Lower leg skin (tissue), 4 donors: ENCODE measurements at regions of chr1 and their contacts with region 1.

Region 1: DNA sequence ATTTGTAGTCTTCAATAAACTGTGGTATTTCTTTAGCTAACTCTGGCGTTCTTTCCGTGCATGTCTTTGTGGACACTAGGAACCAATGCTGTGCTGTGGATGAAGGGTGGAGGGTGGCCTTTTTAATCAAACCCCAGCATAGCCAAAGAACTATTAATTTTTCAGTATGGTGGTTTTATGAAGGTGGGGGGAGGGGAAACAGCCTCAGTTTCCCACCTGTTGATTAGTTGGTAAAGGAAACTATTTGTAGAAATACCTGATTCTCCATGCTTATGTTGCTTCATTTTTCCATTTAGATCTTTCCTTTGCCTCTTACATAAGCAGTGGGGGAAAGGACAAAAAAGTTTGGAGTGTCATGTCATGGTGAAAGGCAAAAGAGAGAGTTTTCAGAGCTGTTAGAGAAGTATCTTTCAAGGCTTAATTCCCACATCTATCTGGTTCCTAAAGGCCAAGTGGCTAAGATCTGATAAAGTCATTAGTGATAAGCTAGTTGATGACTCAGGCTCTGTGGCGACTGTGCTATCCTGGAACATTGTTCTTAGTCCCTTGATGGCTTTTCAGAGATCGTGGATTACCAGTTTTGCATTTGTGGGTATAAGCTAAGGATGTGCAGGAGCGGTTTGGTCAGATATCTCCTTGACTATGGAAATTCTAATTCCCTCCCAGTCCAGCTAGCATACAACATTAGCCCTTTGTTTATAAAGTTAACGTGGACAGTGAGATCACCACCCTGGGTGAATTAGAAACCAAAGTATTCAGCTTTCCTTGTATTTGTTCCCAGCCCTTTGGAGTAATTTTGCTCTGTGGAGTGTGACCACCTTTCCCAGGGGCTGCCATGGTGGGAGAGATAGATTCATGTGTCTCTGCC is 8.7 kb upstream of the HAX1 start:
- DNase-seq: no peak
- H3K4me3 ChIP-seq: no peak overlapping the region
- CTCF ChIP-seq: no peak
- POLR2A ChIP-seq: no peak

Region 2: GRCh38 chr1:154183045-154183915 is 80.4 kb before region 1 on chr1:
- intact Hi-C with region 1: loop called (anchors 10 kb)
- DNase-seq: peak; percentile 94 to 99
- H3K4me3 ChIP-seq: peak overlapping the region; percentile 94
- CTCF ChIP-seq: no peak
- POLR2A ChIP-seq: peak in 1 of 2 donors; percentile 93

Region 3: DNA sequence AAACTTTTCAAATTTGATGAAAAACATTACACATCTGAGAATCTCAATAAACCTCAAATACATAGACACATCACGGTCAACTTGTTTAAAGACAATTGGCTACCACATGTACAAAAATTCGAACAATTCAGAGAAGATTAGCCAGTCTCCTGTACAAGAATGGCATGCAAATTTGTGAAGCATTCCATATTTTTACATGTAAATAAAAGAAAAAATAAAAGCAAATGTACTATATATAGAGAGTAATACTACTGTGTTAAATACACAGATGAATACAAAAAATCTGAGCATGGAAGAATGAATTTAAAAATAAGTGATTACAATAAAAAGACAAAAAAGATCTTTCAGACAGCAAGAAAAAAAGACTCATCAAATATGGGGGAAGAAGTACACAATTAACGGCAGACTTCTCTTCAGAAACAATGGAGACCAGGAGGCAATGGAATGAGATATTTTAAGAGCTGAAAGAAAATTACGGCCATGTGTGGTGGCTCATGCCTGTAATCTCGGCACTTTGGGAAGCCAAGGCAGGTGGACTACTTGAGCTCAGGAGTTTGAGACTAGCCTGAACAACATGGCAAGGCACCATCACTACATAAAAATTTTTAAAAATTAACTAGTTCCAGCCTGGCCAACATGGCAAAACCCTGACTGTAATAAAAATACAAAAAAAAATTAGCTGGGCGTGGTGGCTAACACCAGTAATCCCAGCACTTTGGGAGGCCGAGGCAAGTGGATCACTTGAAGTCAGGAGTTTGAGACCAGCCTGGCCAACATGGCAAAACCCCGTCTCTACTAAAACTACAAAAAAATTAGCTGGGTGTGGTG is 31.9 kb after region 1 on chr1:
- intact Hi-C with region 1: loop called (anchors 1 kb)
- DNase-seq: no peak
- H3K4me3 ChIP-seq: no peak overlapping the region
- CTCF ChIP-seq: no peak
- POLR2A ChIP-seq: no peak

Region 4: GRCh38 chr1:154313066-154313356 is 49.3 kb after region 1 on chr1:
- intact Hi-C with region 1: no loop called
- DNase-seq: no peak
- H3K4me3 ChIP-seq: no peak overlapping the region
- CTCF ChIP-seq: no peak
- POLR2A ChIP-seq: no peak